ENCODE measurements at regions of chr7 and their contacts with region 1.

Region 1: DNA sequence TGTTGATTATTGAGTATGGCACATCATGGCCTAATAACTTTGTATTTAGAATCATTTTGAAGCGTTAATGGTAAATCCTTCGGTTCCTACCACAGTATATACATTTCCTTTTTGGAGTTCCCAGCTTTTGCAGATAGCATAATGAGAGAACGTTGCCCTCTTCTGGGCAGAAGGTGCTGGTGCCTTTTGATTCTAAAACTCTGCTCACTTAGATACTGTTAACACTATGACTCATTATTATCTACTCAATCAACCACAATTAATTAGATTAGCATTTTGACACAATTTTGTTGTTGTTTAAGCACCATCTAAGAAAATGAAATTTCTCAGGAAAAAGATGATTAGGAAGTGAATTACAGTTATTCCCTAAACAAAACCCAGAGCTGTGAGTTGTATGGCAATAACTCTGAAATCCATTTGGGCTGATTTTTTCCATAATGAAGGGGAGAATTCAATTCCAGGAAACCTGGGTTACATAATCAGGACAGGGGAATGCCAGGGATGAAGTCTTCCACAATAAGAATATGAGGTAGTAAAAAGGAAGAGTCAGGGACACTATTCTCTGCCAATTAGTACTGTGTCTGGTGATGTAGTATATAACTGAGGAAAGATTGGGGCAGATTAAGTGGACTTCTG is 11.5 kb upstream of the DLD start:
- DNase-seq: peak in 1 of 3 donors; percentile 40
- ATAC-seq: peak; percentile 60 to 81
- H3K4me3 ChIP-seq: no peak overlapping the region
- H3K27ac ChIP-seq: no peak overlapping the region
- H3K4me1 ChIP-seq: no peaks in the 10 kb centered on the region
- H3K27me3 ChIP-seq: no peaks in the 10 kb centered on the region

Region 2: GRCh38 chr7:108146070-108146837 is 266.7 kb after region 1 on chr7:
- intact Hi-C with region 1: loop called in 2 of 4 experiments (anchors 10 kb)
- DNase-seq: peak in 2 of 3 donors; percentile 42 to 62
- ATAC-seq: peak; percentile 81 to 84
- H3K4me3 ChIP-seq: peak overlapping the region; percentile 29
- H3K27ac ChIP-seq: no peak overlapping the region
- H3K4me1 ChIP-seq: peaks cover 3% of the 10 kb centered on the region
- H3K27me3 ChIP-seq: no peaks in the 10 kb centered on the region